Activated CD8-positive, alpha-beta memory T cell treated with anti-CD3 and anti-CD28 coated beads, Interleukin-2, amount 10 ng/mL, durations not matched to agents 7 days and 5 days (primary cell): ENCODE measurements at regions of chr17 and their contacts with region 1.

Region 1: GRCh38 chr17:42428141-42428944 is 5.3 kb upstream of the CAVIN1 start:
- DNase-seq: peak; percentile 56
- ATAC-seq: peak; percentile 39
- H3K4me3 Mint-ChIP-seq: no peak overlapping the region
- H3K27ac Mint-ChIP-seq: no peak overlapping the region
- H3K4me1 Mint-ChIP-seq: no peaks in the 10 kb centered on the region
- H3K27me3 Mint-ChIP-seq: peaks cover 61% of the 10 kb centered on the region

Region 2: GRCh38 chr17:42441371-42442195 is 13.2 kb after region 1 on chr17:
- CTCF ChIA-PET with region 1: interaction called, 10 read pairs
- DNase-seq: no peak
- ATAC-seq: peak; percentile 57
- H3K4me3 Mint-ChIP-seq: no peak overlapping the region
- H3K27ac Mint-ChIP-seq: no peak overlapping the region
- H3K4me1 Mint-ChIP-seq: peaks cover 16% of the 10 kb centered on the region
- H3K27me3 Mint-ChIP-seq: peaks cover 34% of the 10 kb centered on the region

Region 3: DNA sequence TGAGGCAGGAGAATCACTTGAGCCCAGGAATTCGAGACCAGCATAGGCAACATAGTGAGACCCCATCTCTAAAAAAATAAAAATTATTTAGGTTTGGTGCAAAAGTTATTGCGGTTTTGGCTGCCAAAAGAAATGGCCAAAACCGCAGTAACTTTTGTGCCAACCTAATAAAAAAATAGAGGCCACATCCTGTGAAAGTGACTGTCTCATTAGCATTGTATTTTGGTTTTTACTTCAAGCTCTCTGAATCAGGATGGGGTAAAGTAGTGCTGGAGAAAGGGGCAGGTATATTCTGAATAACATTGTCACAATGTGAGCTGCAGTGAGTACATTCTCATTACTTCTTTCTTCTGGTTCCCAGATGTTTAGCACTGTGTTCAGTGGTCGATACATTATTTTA is 66.3 kb after region 1 on chr17:
- CTCF ChIA-PET with region 1: no interaction called
- DNase-seq: no peak
- ATAC-seq: no peak
- H3K4me3 Mint-ChIP-seq: no peak overlapping the region
- H3K27ac Mint-ChIP-seq: no peak overlapping the region
- H3K4me1 Mint-ChIP-seq: peaks cover 10% of the 10 kb centered on the region
- H3K27me3 Mint-ChIP-seq: peaks cover 5% of the 10 kb centered on the region

Region 4: GRCh38 chr17:42517516-42517915 is 89.2 kb after region 1 on chr17:
- CTCF ChIA-PET with region 1: interaction called, 22 read pairs
- DNase-seq: peak; percentile 85
- ATAC-seq: peak; percentile 91
- H3K4me3 Mint-ChIP-seq: no peak overlapping the region
- H3K27ac Mint-ChIP-seq: no peak overlapping the region
- H3K4me1 Mint-ChIP-seq: no peaks in the 10 kb centered on the region
- H3K27me3 Mint-ChIP-seq: peaks cover 31% of the 10 kb centered on the region